Posterior vena cava (tissue), 2 donors: ENCODE measurements at regions of chr15 and their contacts with region 1.

Region 1: GRCh38 chr15:55221090-55222011 is 24.6 kb upstream of the RSL24D1 start:
- DNase-seq: no peak

Region 2: DNA sequence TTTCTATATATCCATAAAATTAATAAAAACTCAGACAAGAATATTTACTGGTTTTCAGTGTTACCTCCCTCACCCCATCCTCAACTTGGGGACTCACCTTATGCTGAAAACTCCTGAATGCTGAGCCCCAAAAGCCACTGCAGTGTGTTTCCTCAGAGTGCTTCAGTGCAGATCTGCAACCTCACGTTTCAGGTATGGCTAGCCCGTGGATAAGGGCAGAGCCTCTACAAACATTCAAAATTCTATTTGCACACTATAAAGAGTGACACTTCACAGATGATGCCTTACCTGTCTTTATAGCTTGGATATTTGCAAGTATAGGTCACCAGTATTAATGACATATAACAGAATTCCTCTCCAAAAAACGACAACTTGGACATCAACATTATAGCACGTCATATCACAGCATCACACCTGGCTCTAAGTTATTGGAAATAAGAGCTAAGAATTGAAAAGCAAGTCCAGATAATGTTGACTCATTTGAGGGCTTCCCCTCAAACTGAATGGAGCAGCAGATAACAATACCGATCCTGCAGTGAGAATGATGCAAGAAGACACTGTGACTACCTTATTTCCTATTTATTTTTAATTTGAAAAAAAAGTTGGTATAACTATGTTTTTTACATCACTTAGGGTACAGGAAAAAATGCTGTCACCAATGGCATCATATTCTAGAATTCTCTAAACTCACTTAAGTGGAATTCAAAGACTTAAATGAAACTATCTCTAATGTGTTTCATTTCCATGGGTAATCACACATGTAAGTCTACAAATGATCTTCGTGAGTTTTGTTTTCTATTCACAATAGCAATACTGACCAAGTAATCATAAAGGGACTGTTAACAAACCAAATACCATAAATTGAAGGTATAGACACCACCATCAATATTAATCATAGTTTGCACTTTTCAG is 16.1 kb after region 1 on chr15:
- intact Hi-C with region 1: no loop called
- DNase-seq: no peak

Region 3: GRCh38 chr15:55279746-55280351 is 58.5 kb after region 1 on chr15:
- intact Hi-C with region 1: no loop called
- DNase-seq: no peak

Region 4: DNA sequence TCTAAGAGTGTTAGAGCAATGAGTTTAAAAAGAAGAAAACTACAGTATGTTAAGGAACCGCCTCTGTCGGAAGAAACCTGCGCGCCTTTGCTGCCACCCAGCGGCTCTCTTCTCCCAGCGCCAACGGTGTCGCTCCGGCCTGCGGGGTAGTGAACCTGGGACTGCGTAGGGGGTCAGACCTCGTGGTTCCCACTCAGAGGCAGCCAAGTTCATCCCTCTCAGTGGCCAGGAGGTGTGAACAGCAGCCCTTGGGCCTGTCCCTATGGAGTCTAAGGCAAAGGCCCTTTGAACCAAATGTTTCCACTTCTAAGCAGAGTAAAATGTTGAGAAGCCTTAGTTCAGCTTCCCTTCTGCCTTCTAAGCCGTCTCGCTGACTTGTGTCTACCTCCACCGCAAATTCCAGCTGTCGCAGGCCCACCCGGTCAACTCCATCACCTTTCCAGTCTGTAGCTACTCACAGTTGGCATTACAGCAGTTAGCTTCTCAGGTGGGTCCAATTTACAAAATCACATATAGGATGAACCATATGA is 69.2 kb after region 1 on chr15:
- intact Hi-C with region 1: loop called in 1 of 2 experiments (anchors 2 kb)
- DNase-seq: peak; percentile 96

Region 5: DNA sequence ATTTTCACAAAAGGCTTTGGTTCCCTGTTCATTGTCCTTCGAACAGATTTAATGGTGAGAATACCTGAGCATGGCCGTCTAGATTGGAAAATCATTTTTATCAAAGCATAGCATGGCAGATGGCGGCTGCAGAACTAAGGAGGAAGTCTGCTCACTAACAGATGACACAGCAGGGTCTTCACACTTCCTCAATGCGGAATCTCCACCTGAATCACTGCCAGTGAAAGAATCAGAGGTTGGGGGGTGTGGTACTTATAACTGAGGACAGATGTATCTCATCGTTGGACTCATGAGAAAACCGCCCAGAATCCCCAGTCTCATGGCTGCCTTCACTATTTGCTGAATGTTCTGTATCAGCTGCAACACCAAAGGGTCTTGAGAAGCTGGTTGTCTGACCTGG is 398.4 kb after region 1 on chr15:
- intact Hi-C with region 1: no loop called
- DNase-seq: no peak